K562 (cell line): ENCODE measurements at regions of chr1 and their contacts with region 1.

Region 1: DNA sequence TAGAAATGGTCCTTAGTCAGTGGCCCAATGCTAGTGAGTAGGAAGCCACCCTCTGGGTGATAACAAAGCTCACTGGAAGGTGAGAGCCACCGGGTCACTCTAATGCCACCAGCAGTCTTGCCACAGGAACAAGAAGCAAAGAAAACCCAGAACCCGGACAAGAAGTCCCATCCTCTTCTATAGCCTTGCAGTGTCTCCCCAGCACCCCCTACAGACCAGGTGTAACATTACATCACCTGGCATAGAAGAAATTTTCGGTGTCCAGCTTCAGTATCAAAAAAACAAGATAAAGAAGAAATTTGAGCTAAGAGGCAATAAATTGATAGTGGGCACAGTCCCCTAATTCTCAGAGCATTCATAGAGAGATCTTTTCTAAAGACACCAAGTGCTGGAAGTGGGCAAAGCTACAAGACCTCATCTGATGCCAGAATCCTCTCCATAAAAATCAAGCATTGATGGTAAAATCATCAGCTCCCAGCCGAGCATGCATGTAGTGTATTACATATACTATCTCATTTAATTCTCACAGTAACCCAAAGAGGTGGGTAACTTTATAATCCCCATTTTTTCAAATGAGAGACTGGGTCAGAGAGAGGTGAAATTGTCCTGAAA is 491.0 kb downstream of the MATN1 start:
- DNase-seq: peak; percentile 60 to 80 (median 76)
- ATAC-seq: peak; percentile 80
- H3K4me3 ChIP-seq: no peak overlapping the region
- H3K27ac ChIP-seq: no peak overlapping the region
- H3K4me1 ChIP-seq: no peaks in the 10 kb centered on the region
- H3K27me3 ChIP-seq: peaks cover 0 to 23% of the 10 kb centered on the region in 2 experiments; a peak in 1 of 5 replicates
- CTCF ChIP-seq: peak; percentile 79 to 94 (median 93)
- EP300 ChIP-seq: no peak
- POLR2A ChIP-seq: no peak
- RAD21 ChIP-seq: peak; percentile 75 to 87

Region 2: DNA sequence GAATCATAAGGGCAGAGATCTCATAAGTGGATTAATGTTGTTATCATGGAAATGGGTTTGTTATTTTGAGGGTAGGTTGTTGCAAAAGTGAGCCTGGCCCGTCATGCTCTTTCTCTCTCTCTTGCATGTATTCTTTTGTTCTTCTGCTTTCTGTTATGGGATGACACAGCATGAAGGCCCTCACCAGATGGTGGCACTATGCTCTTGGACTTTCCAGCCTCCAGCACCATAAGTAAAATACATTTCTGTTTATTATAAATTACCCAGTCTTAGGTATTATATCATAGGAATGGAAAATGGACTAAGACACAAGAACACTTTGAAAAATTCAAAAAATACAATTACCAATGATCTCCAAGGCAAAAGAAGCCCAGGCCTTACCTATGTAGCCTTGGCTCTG is 320.0 kb before region 1 on chr1:
- CTCF ChIA-PET with region 1: interaction called, 11 read pairs
- POLR2A ChIA-PET with region 1: no interaction called
- in situ Hi-C with region 1: no loop called
- intact Hi-C with region 1: no loop called
- DNase-seq: peak in 1 of 4 experiments; percentile 24
- ATAC-seq: no peak
- H3K4me3 ChIP-seq: no peak overlapping the region
- H3K27ac ChIP-seq: no peak overlapping the region
- H3K4me1 ChIP-seq: no peaks in the 10 kb centered on the region
- H3K27me3 ChIP-seq: peaks cover 0 to 19% of the 10 kb centered on the region in 2 experiments; a peak in 2 of 5 replicates
- CTCF ChIP-seq: peak; percentile 11 to 55 (median 28); a peak in 2 of 6 replicates
- EP300 ChIP-seq: no peak
- POLR2A ChIP-seq: no peak
- RAD21 ChIP-seq: peak in 1 of 2 experiments; percentile 55; a peak in 2 of 4 replicates

Region 3: GRCh38 chr1:30052178-30052577 is 180.2 kb before region 1 on chr1:
- CTCF ChIA-PET with region 1: interaction called, 13 read pairs
- POLR2A ChIA-PET with region 1: no interaction called
- in situ Hi-C with region 1: no loop called
- intact Hi-C with region 1: no loop called
- DNase-seq: peak in 1 of 4 experiments; percentile 11
- ATAC-seq: peak; percentile 53; the same call in 2 of the 3 replicates
- H3K4me3 ChIP-seq: no peak overlapping the region
- H3K27ac ChIP-seq: no peak overlapping the region
- H3K4me1 ChIP-seq: no peaks in the 10 kb centered on the region
- H3K27me3 ChIP-seq: peaks cover 0 to 14% of the 10 kb centered on the region in 2 experiments; a peak in 2 of 5 replicates
- CTCF ChIP-seq: peak; percentile 14 to 41 (median 36); a peak in 3 of 6 replicates
- EP300 ChIP-seq: no peak
- POLR2A ChIP-seq: no peak
- RAD21 ChIP-seq: peak in 1 of 2 experiments; percentile 37; a peak in 2 of 4 replicates

Region 4: GRCh38 chr1:30111431-30111830 is 121.0 kb before region 1 on chr1:
- CTCF ChIA-PET with region 1: no interaction called
- POLR2A ChIA-PET with region 1: no interaction called
- in situ Hi-C with region 1: no loop called
- intact Hi-C with region 1: loop called (anchors 5 kb)
- DNase-seq: peak; percentile 48 to 69 (median 58)
- ATAC-seq: peak; percentile 99
- H3K4me3 ChIP-seq: no peak overlapping the region
- H3K27ac ChIP-seq: no peak overlapping the region
- H3K4me1 ChIP-seq: no peaks in the 10 kb centered on the region; a peak in 1 of 5 replicates
- H3K27me3 ChIP-seq: peaks cover 20 to 31% of the 10 kb centered on the region in 2 experiments; a peak in 4 of 5 replicates
- CTCF ChIP-seq: peak; percentile 71 to 81 (median 79)
- EP300 ChIP-seq: no peak
- POLR2A ChIP-seq: no peak
- RAD21 ChIP-seq: peak; percentile 57 to 75